ENCODE measurements at regions of chr9 and their contacts with region 1.

Region 1: GRCh38 chr9:129482521-129483414 is 138.1 kb downstream of the C9orf50 start:
- DNase-seq: peak; percentile 89
- H3K4me3 ChIP-seq: peak overlapping the region; percentile 70
- H3K27ac ChIP-seq: peak overlapping the region; percentile 98
- H3K4me1 ChIP-seq: peaks cover 84% of the 10 kb centered on the region
- H3K27me3 ChIP-seq: no peaks in the 10 kb centered on the region
- CTCF ChIP-seq: no peak

Region 2: GRCh38 chr9:129177791-129178559 is 304.8 kb before region 1 on chr9 and contains the start of gene IER5L:
- intact Hi-C with region 1: loop called (anchors 10 kb)
- DNase-seq: peak; percentile 95
- H3K4me3 ChIP-seq: peak within 1 kb of the TSS; percentile 92
- H3K27ac ChIP-seq: peak within 1 kb of the TSS; percentile 99
- H3K4me1 ChIP-seq: peaks cover 55% of the 10 kb centered on the region
- H3K27me3 ChIP-seq: no peaks in the 10 kb centered on the region
- CTCF ChIP-seq: no peak
- total RNA-seq, gene IER5L: 3.8 TPM

Region 3: DNA sequence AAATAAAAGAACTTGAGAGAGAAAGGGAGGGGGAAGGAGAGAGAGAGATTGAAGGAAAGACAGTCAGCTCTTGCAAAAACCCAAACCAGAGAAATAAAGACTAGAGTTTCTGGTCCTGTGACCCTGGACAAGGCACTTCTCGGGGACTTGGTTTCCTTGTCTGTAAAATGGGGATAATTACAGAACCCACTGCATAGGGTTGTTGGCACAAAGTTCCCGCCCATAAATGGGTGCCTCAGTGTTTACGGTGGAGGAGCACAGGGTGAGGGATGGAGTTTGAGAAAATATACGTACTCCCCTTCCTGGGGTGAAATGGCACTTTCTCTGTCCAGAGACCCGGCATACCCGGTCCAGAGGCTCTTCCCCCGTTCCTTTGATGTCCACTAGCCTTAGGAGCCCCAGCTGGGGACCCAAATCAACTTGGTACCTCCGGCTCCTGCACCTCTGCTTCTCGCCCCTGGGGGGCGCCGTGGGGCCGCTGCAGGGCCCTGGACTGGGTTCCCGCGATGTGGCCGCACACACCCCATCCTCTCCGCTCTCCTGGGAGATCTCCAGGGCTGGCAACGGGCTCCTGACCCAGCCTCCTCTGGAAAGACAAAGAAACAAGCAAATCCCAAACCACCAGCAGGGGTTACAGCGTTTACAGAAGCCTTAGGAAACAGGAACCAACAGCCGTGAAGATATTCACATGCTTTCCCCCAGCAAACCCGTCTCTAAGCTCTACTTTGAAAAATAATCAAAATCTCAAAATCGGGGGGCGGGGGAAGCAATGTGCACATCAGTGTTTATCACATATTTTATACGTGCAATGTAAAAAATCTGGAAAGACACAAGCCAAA is 243.8 kb after region 1 on chr9:
- intact Hi-C with region 1: no loop called
- DNase-seq: peak; percentile 68
- H3K4me3 ChIP-seq: peak overlapping the region; percentile 10
- H3K27ac ChIP-seq: peak overlapping the region; percentile 32
- H3K4me1 ChIP-seq: peaks cover 14% of the 10 kb centered on the region
- H3K27me3 ChIP-seq: peaks cover 32% of the 10 kb centered on the region
- CTCF ChIP-seq: peak; percentile 92